ENCODE measurements at regions of chr14 and their contacts with region 1.

Region 1: DNA sequence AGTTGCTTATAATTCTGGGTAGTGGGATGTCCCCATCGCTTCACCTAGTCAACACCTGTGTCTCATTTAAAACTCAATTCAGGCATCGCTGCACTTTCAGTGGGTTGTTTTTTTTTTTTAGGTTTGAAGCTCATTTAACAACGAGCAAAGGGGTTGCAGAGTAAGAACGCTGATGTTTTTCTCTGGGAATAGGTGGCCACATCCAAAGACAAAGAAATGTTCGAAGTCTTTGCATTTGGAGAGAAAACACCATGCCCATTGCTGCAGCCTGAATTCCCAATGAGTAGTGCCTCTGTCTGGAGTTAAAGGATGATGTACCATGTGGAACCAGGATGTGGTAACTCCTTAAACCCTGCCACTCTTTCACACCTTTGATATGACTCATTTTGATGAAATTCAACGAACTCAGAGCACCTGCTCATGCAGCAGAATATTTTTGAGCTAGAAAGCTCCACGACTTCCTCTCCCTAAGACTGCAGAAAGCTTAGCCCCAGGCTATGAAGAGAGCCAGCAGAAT is 35.1 kb upstream of the BATF start:
- DNase-seq: peak; percentile 89
- ATAC-seq: peak; percentile 84
- H3K4me3 ChIP-seq: no peak overlapping the region
- H3K27ac ChIP-seq: peak overlapping the region; percentile 69
- H3K4me1 ChIP-seq: peaks cover 33% of the 10 kb centered on the region
- H3K27me3 ChIP-seq: no peaks in the 10 kb centered on the region
- CTCF ChIP-seq: no peak
- EP300 ChIP-seq: peak; percentile 75 to 86; a peak in 3 of 4 replicates
- POLR2A ChIP-seq: no peak
- RAD21 ChIP-seq: peak; percentile 9; the same call in 1 of the 2 replicates

Region 2: DNA sequence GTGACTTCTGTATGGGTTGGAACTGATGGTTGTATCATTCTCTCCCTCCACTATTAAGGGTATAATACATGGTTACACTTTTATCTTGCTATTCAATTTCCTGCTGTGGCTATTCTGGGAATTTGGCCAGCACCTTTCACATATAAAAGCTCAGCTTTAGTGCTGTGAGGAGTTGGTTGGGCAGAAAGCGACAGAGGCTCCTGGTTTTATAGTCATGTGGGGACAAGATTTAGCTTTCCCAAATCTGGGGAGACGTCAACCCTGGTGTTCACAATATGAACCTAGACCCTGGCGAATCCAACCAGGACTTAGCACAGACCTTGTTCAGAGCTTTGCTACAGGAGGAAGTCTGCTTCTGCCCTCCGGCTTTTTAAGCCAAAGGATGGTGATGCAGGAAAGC is 172.1 kb before region 1 on chr14:
- CTCF ChIA-PET with region 1: interaction called, 180 read pairs
- POLR2A ChIA-PET with region 1: interaction called, 3 read pairs
- RAD21 ChIA-PET with region 1: interaction called, 72 read pairs
- SMC1A ChIA-PET with region 1: interaction called, 180 read pairs
- in situ Hi-C with region 1: no loop called
- intact Hi-C with region 1: no loop called
- DNase-seq: no peak
- ATAC-seq: no peak
- H3K4me3 ChIP-seq: no peak overlapping the region
- H3K27ac ChIP-seq: no peak overlapping the region
- H3K4me1 ChIP-seq: no peaks in the 10 kb centered on the region
- H3K27me3 ChIP-seq: no peaks in the 10 kb centered on the region; a peak in 1 of 4 replicates
- CTCF ChIP-seq: no peak
- EP300 ChIP-seq: no peak
- POLR2A ChIP-seq: no peak
- RAD21 ChIP-seq: no peak

Region 3: GRCh38 chr14:75440733-75441477 is 46.3 kb before region 1 on chr14:
- CTCF ChIA-PET with region 1: interaction called, 25 read pairs
- POLR2A ChIA-PET with region 1: interaction called, 5 read pairs
- RAD21 ChIA-PET with region 1: interaction called, 7 read pairs
- SMC1A ChIA-PET with region 1: interaction called, 9 read pairs
- in situ Hi-C with region 1: no loop called
- intact Hi-C with region 1: no loop called
- DNase-seq: no peak
- ATAC-seq: no peak; the same call in 2 of the 3 replicates
- H3K4me3 ChIP-seq: no peak overlapping the region
- H3K27ac ChIP-seq: peak overlapping the region; percentile 24; the same call in 1 of the 2 replicates
- H3K4me1 ChIP-seq: peaks cover 39% of the 10 kb centered on the region
- H3K27me3 ChIP-seq: no peaks in the 10 kb centered on the region
- CTCF ChIP-seq: no peak
- EP300 ChIP-seq: no peak
- POLR2A ChIP-seq: no peak
- RAD21 ChIP-seq: no peak

Region 4: GRCh38 chr14:75506930-75507329 is 19.7 kb after region 1 on chr14:
- CTCF ChIA-PET with region 1: interaction called, 520 read pairs
- POLR2A ChIA-PET with region 1: interaction called, 385 read pairs
- RAD21 ChIA-PET with region 1: interaction called, 645 read pairs
- SMC1A ChIA-PET with region 1: interaction called, 619 read pairs
- in situ Hi-C with region 1: no loop called
- intact Hi-C with region 1: no loop called
- DNase-seq: no peak
- ATAC-seq: no peak
- H3K4me3 ChIP-seq: no peak overlapping the region
- H3K27ac ChIP-seq: no peak overlapping the region
- H3K4me1 ChIP-seq: peaks cover 6% of the 10 kb centered on the region; the same call in 1 of the 2 replicates
- H3K27me3 ChIP-seq: no peaks in the 10 kb centered on the region
- CTCF ChIP-seq: no peak
- EP300 ChIP-seq: no peak
- POLR2A ChIP-seq: no peak
- RAD21 ChIP-seq: no peak

Region 5: GRCh38 chr14:75522224-75522982 is 35.2 kb after region 1 on chr14 and contains the start of gene BATF:
- CTCF ChIA-PET with region 1: interaction called, 520 read pairs
- POLR2A ChIA-PET with region 1: interaction called, 385 read pairs
- RAD21 ChIA-PET with region 1: interaction called, 645 read pairs
- SMC1A ChIA-PET with region 1: interaction called, 619 read pairs
- in situ Hi-C with region 1: no loop called
- intact Hi-C with region 1: loop called (anchors 5 kb)
- DNase-seq: no peak
- ATAC-seq: peak; percentile 58
- H3K4me3 ChIP-seq: peak within 1 kb of the TSS; percentile 95
- H3K27ac ChIP-seq: peak within 1 kb of the TSS; percentile 93
- H3K4me1 ChIP-seq: peaks cover 29% of the 10 kb centered on the region
- H3K27me3 ChIP-seq: no peaks in the 10 kb centered on the region
- CTCF ChIP-seq: no peak
- EP300 ChIP-seq: peak; percentile 22 to 42; a peak in 1 of 4 replicates
- POLR2A ChIP-seq: peak; percentile 98
- RAD21 ChIP-seq: peak; percentile 25; the same call in 1 of the 2 replicates
- polyA plus RNA-seq, gene BATF: 10.0 to 30.9 TPM

Region 6: GRCh38 chr14:75560962-75561432 is 73.8 kb after region 1 on chr14:
- CTCF ChIA-PET with region 1: interaction called, 180 read pairs
- POLR2A ChIA-PET with region 1: interaction called, 5 read pairs
- RAD21 ChIA-PET with region 1: interaction called, 113 read pairs
- SMC1A ChIA-PET with region 1: interaction called, 136 read pairs
- in situ Hi-C with region 1: no loop called
- intact Hi-C with region 1: loop called (anchors 2 kb)
- DNase-seq: no peak
- ATAC-seq: peak; percentile 77
- H3K4me3 ChIP-seq: no peak overlapping the region
- H3K27ac ChIP-seq: no peak overlapping the region
- H3K4me1 ChIP-seq: peaks cover 27% of the 10 kb centered on the region
- H3K27me3 ChIP-seq: no peaks in the 10 kb centered on the region
- CTCF ChIP-seq: peak; percentile 84 to 91 (median 86)
- EP300 ChIP-seq: no peak
- POLR2A ChIP-seq: no peak
- RAD21 ChIP-seq: peak; percentile 82

Region 7: GRCh38 chr14:75660630-75661494 is 173.6 kb after region 1 on chr14 and contains the starts of genes ERG28 and TTLL5:
- CTCF ChIA-PET with region 1: interaction called, 81 read pairs
- POLR2A ChIA-PET with region 1: no interaction called
- RAD21 ChIA-PET with region 1: interaction called, 5 read pairs
- SMC1A ChIA-PET with region 1: interaction called, 4 read pairs
- in situ Hi-C with region 1: no loop called
- intact Hi-C with region 1: no loop called
- DNase-seq: peak; percentile 99
- ATAC-seq: peak; percentile 99
- H3K4me3 ChIP-seq: peak within 1 kb of the TSS; percentile 89
- H3K27ac ChIP-seq: peak within 1 kb of the TSS; percentile 49
- H3K4me1 ChIP-seq: no peaks in the 10 kb centered on the region
- H3K27me3 ChIP-seq: no peaks in the 10 kb centered on the region
- CTCF ChIP-seq: no peak
- EP300 ChIP-seq: 0 out of 4 replicates have a peak, but pooled peaks of 1 of the 2 experiments have one; percentile 16
- POLR2A ChIP-seq: peak; percentile 82
- RAD21 ChIP-seq: no peak
- polyA plus RNA-seq, gene ERG28: 52.6 to 67.0 TPM
- polyA plus RNA-seq, gene TTLL5: 3.2 to 5.2 TPM

Measured in GM12878 (cell line).